ENCODE measurements at regions of chr18 and their contacts with region 1.

Region 1: DNA sequence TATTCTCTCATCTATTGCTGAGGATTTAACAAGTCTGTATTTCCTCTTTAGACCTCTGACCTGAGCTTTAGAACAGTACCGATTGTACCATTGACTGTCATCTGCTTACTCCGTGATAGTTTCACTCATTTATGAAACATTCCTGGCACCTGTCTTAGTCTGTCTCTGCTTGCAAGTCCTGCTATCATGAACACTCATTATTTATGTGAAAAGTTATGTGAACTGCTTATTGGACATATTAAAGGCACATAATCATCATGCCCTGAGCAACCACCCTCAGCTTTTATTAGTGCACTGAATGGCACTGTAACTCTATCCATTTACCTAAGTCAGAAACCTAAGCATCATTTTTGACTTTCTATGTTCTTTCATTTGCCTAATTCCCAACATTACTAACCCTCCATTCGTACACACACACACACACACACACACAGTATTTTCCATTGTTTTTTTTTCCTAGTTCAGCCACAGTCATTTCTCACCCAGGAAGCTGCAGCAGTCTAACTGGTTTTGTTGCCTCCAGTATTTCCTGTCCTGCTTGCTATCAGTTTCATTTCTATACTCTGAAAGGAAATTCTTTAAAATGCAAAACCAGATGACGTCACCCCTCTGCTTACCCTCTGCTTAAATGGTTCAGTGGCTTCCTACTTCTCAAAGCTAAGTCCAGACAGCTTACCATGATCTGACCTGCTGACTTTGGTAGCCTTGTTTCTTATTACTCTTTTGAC is 146.1 kb downstream of the HAUS1 start:
- DNase-seq: peak; percentile 93
- ATAC-seq: peak; percentile 94
- H3K4me3 ChIP-seq: peak overlapping the region; percentile 19 to 53 (median 42)
- H3K4me3 Mint-ChIP-seq: peak overlapping the region; percentile 84
- H3K27ac ChIP-seq: peak overlapping the region; percentile 96 to 98
- H3K27ac Mint-ChIP-seq: peak overlapping the region; percentile 93
- H3K4me1 ChIP-seq: peaks cover 19 to 31% of the 10 kb centered on the region in 2 donors
- H3K4me1 Mint-ChIP-seq: peaks cover 36% of the 10 kb centered on the region
- H3K27me3 ChIP-seq: no peaks in the 10 kb centered on the region
- H3K27me3 Mint-ChIP-seq: no peaks in the 10 kb centered on the region
- CTCF ChIP-seq: no peak

Region 2: GRCh38 chr18:46167971-46168370 is 82.3 kb before region 1 on chr18:
- CTCF ChIA-PET with region 1: interaction called, 34 read pairs
- POLR2A ChIA-PET with region 1: interaction called, 15 read pairs
- intact Hi-C with region 1: loop called (anchors 1 kb)
- DNase-seq: peak; percentile 93
- ATAC-seq: peak; percentile 96
- H3K4me3 ChIP-seq: peak overlapping the region in 3 of 5 experiments; percentile 18 to 46 (median 32)
- H3K4me3 Mint-ChIP-seq: peak overlapping the region; percentile 81
- H3K27ac ChIP-seq: peak overlapping the region; percentile 75 to 81
- H3K27ac Mint-ChIP-seq: peak overlapping the region; percentile 96
- H3K4me1 ChIP-seq: peaks cover 12 to 32% of the 10 kb centered on the region in 2 donors
- H3K4me1 Mint-ChIP-seq: peaks cover 26% of the 10 kb centered on the region
- H3K27me3 ChIP-seq: no peaks in the 10 kb centered on the region
- H3K27me3 Mint-ChIP-seq: no peaks in the 10 kb centered on the region
- CTCF ChIP-seq: no peak

Region 3: DNA sequence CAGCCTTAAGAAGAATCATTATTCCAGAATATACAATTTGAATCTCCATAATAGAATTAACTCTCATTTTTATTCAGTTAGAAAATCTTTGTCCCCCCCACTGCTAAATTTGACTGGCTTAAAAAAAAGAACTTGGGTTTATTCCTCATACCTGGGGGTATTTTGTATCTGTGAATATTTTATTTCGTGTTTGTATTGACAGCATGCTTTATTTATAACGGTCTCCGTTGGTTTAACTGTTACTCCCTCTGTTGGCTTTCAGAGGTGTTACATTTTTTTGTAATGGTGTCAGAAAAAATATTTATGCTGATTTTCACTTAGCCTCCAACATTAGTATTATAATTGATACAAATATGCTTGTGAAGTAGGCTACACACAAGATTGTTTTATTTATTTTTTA is 37.0 kb before region 1 on chr18:
- CTCF ChIA-PET with region 1: interaction called, 7 read pairs
- POLR2A ChIA-PET with region 1: interaction called, 3 read pairs
- intact Hi-C with region 1: loop called (anchors 2 kb)
- DNase-seq: peak; percentile 42
- ATAC-seq: peak; percentile 33
- H3K4me3 ChIP-seq: no peak overlapping the region
- H3K4me3 Mint-ChIP-seq: no peak overlapping the region
- H3K27ac ChIP-seq: no peak overlapping the region
- H3K27ac Mint-ChIP-seq: no peak overlapping the region
- H3K4me1 ChIP-seq: peaks cover 10 to 20% of the 10 kb centered on the region in 2 donors
- H3K4me1 Mint-ChIP-seq: peaks cover 61% of the 10 kb centered on the region
- H3K27me3 ChIP-seq: no peaks in the 10 kb centered on the region
- H3K27me3 Mint-ChIP-seq: no peaks in the 10 kb centered on the region
- CTCF ChIP-seq: peak; percentile 79

Region 4: GRCh38 chr18:46264235-46264893 is 14.1 kb after region 1 on chr18:
- CTCF ChIA-PET with region 1: no interaction called
- POLR2A ChIA-PET with region 1: no interaction called
- intact Hi-C with region 1: no loop called
- DNase-seq: peak; percentile 38
- ATAC-seq: no peak
- H3K4me3 ChIP-seq: no peak overlapping the region
- H3K4me3 Mint-ChIP-seq: no peak overlapping the region
- H3K27ac ChIP-seq: no peak overlapping the region
- H3K27ac Mint-ChIP-seq: no peak overlapping the region
- H3K4me1 ChIP-seq: no peaks in the 10 kb centered on the region
- H3K4me1 Mint-ChIP-seq: peaks cover 29% of the 10 kb centered on the region
- H3K27me3 ChIP-seq: no peaks in the 10 kb centered on the region
- H3K27me3 Mint-ChIP-seq: no peaks in the 10 kb centered on the region
- CTCF ChIP-seq: no peak

Region 5: DNA sequence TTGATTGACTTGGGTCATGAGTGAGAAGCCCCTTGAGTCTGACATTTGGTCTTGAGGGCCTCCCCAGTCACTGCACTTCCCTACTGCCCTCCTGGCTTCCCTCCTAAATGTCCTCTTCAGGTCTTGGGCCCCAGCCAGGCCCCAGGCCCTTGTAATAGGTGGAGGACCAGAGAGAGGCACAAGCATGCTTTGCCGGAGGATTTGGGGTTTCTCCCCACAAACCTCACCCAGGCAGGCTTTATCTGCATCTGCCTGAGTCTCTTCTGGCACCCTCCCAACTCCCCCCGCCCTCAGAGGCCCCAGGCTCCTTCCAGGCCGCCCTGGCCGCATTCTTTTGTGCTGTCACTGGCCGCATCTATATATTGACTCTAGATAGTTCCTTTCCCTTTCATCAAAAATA is 124.6 kb after region 1 on chr18:
- CTCF ChIA-PET with region 1: no interaction called
- POLR2A ChIA-PET with region 1: no interaction called
- intact Hi-C with region 1: no loop called
- DNase-seq: no peak
- ATAC-seq: no peak
- H3K4me3 ChIP-seq: no peak overlapping the region
- H3K4me3 Mint-ChIP-seq: no peak overlapping the region
- H3K27ac ChIP-seq: no peak overlapping the region
- H3K27ac Mint-ChIP-seq: no peak overlapping the region
- H3K4me1 ChIP-seq: no peaks in the 10 kb centered on the region
- H3K4me1 Mint-ChIP-seq: no peaks in the 10 kb centered on the region
- H3K27me3 ChIP-seq: no peaks in the 10 kb centered on the region
- H3K27me3 Mint-ChIP-seq: peaks cover 7% of the 10 kb centered on the region
- CTCF ChIP-seq: no peak

Measured in B cell (primary cell).